WTC11 (cell line): ENCODE measurements at regions of chr12 and their contacts with region 1.

Region 1: GRCh38 chr12:76878899-76879709 is at the start of gene CSRP2:
- DNase-seq: peak; percentile 95
- ATAC-seq: peak; percentile 89
- H3K4me3 Mint-ChIP-seq: peak within 1 kb of the TSS; percentile 95
- H3K27ac Mint-ChIP-seq: peak within 1 kb of the TSS; percentile 98
- H3K4me1 Mint-ChIP-seq: peaks cover 42% of the 10 kb centered on the region
- H3K27me3 Mint-ChIP-seq: no peaks in the 10 kb centered on the region
- CTCF ChIP-seq: no peak
- total RNA-seq, gene CSRP2: 157 to 179 TPM (median 176 TPM) in 3 replicates

Region 2: DNA sequence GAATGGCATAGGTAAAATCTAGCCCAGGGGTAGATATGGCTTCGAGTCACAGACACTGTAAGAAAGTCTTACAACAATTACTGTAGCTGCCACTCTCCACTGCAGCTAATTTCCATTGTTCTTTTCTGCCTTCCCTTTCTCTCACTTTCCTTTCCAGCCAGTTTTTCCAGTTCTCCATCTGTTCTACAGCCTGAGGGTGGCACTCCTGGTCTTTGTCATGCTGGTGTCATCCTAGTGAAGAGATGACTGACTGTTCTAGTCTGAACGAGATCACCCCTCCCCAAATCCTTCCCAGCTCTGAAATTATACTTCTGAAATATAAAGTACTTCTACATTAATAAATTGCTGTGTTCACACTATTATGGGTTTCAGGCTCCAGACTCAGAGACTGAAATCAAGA is 73.9 kb after region 1 on chr12:
- CTCF ChIA-PET with region 1: no interaction called
- POLR2A ChIA-PET with region 1: no interaction called
- DNase-seq: no peak
- ATAC-seq: peak; percentile 86
- H3K4me3 Mint-ChIP-seq: no peak overlapping the region
- H3K27ac Mint-ChIP-seq: no peak overlapping the region
- H3K4me1 Mint-ChIP-seq: peaks cover 14% of the 10 kb centered on the region
- H3K27me3 Mint-ChIP-seq: no peaks in the 10 kb centered on the region
- CTCF ChIP-seq: no peak

Region 3: GRCh38 chr12:77087427-77087826 is 208.3 kb after region 1 on chr12:
- CTCF ChIA-PET with region 1: no interaction called
- POLR2A ChIA-PET with region 1: no interaction called
- DNase-seq: no peak
- ATAC-seq: peak; percentile 48; the same call in 1 of the 2 replicates
- H3K4me3 Mint-ChIP-seq: no peak overlapping the region
- H3K27ac Mint-ChIP-seq: no peak overlapping the region
- H3K4me1 Mint-ChIP-seq: peaks cover 7% of the 10 kb centered on the region; the same call in 1 of the 2 replicates
- H3K27me3 Mint-ChIP-seq: no peaks in the 10 kb centered on the region
- CTCF ChIP-seq: no peak

Region 4: DNA sequence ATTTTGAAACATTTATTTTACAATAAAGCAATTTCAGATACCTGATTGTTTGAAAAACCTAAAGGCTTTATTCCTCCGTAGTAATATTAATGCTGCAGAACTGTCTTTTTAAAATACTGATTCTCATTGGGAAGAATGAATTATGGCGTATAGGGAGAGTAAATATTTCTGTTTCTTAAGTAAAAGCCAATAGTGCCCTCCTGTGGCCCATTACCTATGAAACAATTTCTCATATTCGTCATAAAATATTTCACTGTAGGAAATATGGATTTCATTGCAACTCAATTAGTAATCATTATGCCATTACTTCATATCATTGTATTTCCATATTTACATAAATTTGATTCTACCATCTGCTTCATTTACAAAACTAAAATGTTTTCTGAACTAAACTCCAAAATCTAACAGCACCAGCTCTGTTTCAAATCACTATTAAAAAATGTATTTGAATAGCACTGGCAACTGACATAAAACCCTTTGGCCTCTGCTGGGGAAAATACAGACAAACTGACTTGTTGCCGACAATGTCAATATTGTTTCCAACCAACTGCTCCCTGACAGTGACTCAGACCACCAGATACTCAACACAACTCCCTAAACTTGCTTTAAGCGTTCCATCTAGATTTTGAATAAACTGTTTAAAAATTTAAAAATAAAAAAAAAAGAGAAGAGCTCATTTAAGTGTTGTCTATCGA is 1241.9 kb after region 1 on chr12:
- CTCF ChIA-PET with region 1: interaction called, 10 read pairs
- POLR2A ChIA-PET with region 1: no interaction called
- DNase-seq: no peak
- ATAC-seq: no peak
- H3K4me3 Mint-ChIP-seq: no peak overlapping the region
- H3K27ac Mint-ChIP-seq: no peak overlapping the region
- H3K4me1 Mint-ChIP-seq: no peaks in the 10 kb centered on the region
- H3K27me3 Mint-ChIP-seq: no peaks in the 10 kb centered on the region
- CTCF ChIP-seq: no peak